ENCODE measurements at regions of chr18 and their contacts with region 1.

Region 1: DNA sequence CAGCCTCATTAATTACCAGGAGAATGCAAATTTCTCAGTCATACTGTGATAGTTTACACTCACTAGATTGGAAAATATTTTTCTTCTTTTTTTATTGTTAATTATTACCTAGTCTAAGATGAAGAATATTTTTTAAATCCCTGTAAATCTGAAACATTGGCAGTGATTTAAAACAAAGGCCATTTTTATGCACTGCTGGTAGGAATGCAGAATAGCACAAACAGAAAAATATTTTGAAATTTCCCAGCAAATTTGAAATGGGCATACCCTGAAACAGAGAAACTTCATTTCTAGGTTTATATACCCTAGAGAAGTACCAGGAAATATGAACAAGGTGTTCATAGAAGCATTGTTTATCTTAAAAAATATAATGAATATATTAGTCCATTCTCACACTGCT is 31.0 kb downstream of the DYNAP start:
- DNase-seq: no peak
- H3K4me3 ChIP-seq: no peak overlapping the region
- H3K27ac ChIP-seq: no peak overlapping the region
- H3K4me1 ChIP-seq: no peaks in the 10 kb centered on the region
- H3K27me3 ChIP-seq: peaks cover 2% of the 10 kb centered on the region
- CTCF ChIP-seq: peak in 1 of 2 donors; percentile 30

Region 2: GRCh38 chr18:54580202-54580729 is 41.8 kb before region 1 on chr18:
- CTCF ChIA-PET with region 1: no interaction called
- dilution Hi-C with region 1: no loop called
- in situ Hi-C with region 1: no loop called
- intact Hi-C with region 1: loop called (anchors 5 kb)
- DNase-seq: no peak
- H3K4me3 ChIP-seq: no peak overlapping the region
- H3K27ac ChIP-seq: no peak overlapping the region
- H3K4me1 ChIP-seq: no peaks in the 10 kb centered on the region
- H3K27me3 ChIP-seq: peaks cover 4% of the 10 kb centered on the region
- CTCF ChIP-seq: no peak

Region 3: DNA sequence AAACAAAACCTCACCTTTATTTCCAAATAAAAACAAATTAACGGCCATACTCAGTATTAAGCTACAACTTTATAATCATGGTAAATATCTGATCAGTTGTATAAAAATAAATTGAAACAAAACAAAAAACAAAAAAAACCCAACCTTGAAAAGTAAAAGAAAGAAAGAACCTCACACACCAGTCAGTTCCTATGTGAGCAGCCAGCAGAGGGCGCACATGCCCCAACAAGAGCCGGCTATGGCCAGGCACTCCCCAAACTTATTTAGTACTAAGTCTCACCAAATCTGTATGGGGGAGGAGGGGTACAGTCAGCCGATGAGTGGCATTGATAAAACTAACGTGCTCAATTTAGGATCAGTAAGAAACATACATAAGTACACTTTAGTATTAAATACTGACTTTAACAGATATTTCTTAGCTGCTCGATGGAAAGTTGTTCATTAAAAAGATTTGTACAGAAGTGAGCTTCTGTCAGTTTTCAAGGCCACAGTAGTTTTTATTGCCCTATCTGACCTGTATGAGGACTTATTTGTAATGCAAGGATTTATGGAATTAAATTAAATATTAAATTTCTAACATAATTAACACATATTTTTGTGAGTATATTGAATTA is 793.3 kb after region 1 on chr18:
- CTCF ChIA-PET with region 1: no interaction called
- dilution Hi-C with region 1: no loop called
- in situ Hi-C with region 1: no loop called
- intact Hi-C with region 1: no loop called
- DNase-seq: peak; percentile 43
- H3K4me3 ChIP-seq: no peak overlapping the region
- H3K27ac ChIP-seq: no peak overlapping the region
- H3K4me1 ChIP-seq: no peaks in the 10 kb centered on the region
- H3K27me3 ChIP-seq: no peaks in the 10 kb centered on the region
- CTCF ChIP-seq: peak; percentile 85 to 90